ENCODE measurements at regions of chr20 and their contacts with region 1.

Region 1: DNA sequence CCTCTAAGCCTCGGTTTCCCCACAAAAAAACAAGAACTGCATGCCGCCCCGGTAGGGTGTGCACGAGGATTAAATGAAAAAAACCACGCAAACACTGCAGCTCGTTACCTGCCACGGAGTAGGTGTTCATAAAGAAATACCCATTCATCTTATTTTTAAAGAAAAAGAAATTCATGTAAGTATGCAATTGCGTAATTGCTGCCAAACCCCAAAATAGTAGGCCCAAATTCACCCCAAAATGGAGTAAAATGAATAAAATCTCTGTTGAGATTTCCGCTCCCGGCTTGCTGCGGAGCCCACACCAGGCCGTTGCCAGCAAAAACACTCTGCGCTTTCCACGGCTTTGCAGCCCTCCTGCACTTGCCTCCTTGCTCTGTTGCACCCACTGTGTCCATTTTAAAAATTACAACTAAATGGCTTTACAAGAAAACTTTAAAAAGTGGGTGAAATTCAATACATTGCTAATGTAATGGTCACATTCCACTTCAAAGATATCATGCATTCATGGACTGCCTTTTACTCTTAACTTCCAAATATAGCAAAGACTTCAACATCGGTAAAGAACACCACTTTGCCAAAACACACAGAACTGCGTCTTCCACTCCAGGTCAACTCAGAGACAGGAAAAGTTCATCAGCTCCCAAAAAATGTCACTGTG is 125.0 kb downstream of the ZMYND8 start:
- DNase-seq: no peak
- ATAC-seq: no peak
- H3K4me3 ChIP-seq: no peak overlapping the region
- H3K27ac ChIP-seq: no peak overlapping the region
- H3K4me1 ChIP-seq: peaks cover 43% of the 10 kb centered on the region
- H3K27me3 ChIP-seq: no peaks in the 10 kb centered on the region
- CTCF ChIP-seq: no peak
- EP300 ChIP-seq: no peak
- POLR2A ChIP-seq: no peak
- RAD21 ChIP-seq: no peak

Region 2: DNA sequence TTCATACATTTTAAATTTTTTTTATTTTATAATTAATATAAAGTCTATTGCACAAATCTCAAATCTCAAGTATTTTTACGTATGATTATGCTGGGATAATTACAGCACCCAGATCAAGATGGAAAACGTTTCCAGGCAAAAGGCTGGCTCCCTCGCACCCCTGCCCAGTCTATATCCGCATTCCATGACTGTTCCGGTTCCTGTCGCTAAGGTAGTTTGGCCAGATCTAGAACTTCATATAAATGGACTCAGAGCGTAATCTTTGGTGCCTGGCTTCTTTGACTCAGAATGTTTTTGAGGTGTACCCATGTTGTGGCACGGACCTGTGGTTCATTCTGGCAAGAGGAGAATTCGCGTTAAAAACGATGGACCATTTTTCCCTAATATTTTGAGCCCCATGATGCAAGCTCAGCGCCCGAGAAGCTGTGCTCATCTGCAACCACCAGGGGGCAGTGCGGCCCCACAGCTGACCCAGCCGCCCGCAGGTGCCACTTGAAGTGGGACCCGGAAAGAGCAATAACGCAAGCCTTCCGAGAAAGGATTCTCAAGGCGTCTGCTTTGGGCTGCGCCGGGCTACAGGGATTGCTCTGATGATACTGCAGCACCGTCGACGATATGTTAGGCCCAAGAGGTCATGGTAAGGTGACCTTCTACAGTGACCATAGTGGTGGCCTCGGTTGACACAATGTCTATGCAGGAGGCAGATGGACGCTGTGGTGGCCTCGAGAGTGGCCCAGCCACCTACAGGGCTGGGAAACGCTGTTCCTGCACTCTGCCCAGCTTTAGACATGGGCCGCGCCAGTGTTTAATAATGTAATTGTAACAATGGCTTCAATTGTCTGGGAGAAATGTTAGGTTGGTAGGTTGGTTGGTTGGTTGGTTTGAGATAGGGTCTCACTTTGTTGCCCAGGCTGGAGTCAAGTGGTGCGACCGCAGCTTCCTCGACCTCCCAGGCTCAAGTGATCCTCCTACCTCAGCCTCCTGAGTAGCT is 35.1 kb before region 1 on chr20:
- CTCF ChIA-PET with region 1: no interaction called
- POLR2A ChIA-PET with region 1: interaction called, 4 read pairs
- in situ Hi-C with region 1: no loop called
- intact Hi-C with region 1: loop called (anchors 1 kb)
- DNase-seq: peak; percentile 70
- ATAC-seq: peak; percentile 56
- H3K4me3 ChIP-seq: peak overlapping the region; percentile 15 to 64 (median 44); a peak in 5 of 6 replicates
- H3K27ac ChIP-seq: no peak overlapping the region
- H3K4me1 ChIP-seq: peaks cover 41% of the 10 kb centered on the region
- H3K27me3 ChIP-seq: peaks cover 0 to 7% of the 10 kb centered on the region in 2 experiments; a peak in 3 of 5 replicates
- CTCF ChIP-seq: peak; percentile 99
- EP300 ChIP-seq: no peak
- POLR2A ChIP-seq: no peak
- RAD21 ChIP-seq: peak; percentile 99

Region 3: GRCh38 chr20:47296950-47297349 is 65.4 kb after region 1 on chr20:
- CTCF ChIA-PET with region 1: no interaction called
- POLR2A ChIA-PET with region 1: no interaction called
- in situ Hi-C with region 1: no loop called
- intact Hi-C with region 1: no loop called
- DNase-seq: no peak
- ATAC-seq: peak; percentile 53
- H3K4me3 ChIP-seq: no peak overlapping the region
- H3K27ac ChIP-seq: no peak overlapping the region
- H3K4me1 ChIP-seq: no peaks in the 10 kb centered on the region
- H3K27me3 ChIP-seq: no peaks in the 10 kb centered on the region
- CTCF ChIP-seq: peak; percentile 67
- EP300 ChIP-seq: no peak
- POLR2A ChIP-seq: no peak
- RAD21 ChIP-seq: peak; percentile 48

Region 4: DNA sequence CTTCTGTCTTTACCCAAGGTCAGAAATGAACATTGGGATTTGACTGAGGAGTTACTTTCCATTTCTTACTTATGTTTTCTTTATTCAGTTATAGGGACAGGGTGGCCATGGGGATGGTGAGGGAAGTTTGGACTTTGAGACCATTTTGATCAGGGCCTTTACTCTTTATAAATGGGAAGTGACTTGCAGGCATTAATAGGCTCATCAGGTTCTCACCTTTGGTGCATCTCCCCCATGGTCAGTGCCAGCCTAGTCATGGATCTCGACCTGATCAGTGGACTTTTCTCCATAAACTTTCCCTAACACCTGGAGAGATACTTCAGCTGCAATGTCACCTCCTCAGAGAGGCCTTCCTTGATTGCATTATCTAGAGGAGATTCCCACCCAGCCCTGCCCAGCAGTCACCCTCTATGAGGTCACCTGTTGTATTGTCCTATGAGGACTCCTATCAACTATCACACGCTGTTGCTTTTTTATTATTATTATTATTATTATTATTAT is 141.8 kb after region 1 on chr20:
- CTCF ChIA-PET with region 1: no interaction called
- POLR2A ChIA-PET with region 1: no interaction called
- in situ Hi-C with region 1: no loop called
- intact Hi-C with region 1: no loop called
- DNase-seq: no peak
- ATAC-seq: no peak
- H3K4me3 ChIP-seq: no peak overlapping the region
- H3K27ac ChIP-seq: no peak overlapping the region
- H3K4me1 ChIP-seq: peaks cover 51% of the 10 kb centered on the region
- H3K27me3 ChIP-seq: no peaks in the 10 kb centered on the region
- CTCF ChIP-seq: no peak
- EP300 ChIP-seq: no peak
- POLR2A ChIP-seq: no peak
- RAD21 ChIP-seq: no peak